Upper lobe of right lung (tissue), 1 donor: ENCODE measurements at regions of chr17 and their contacts with region 1.

Region 1: GRCh38 chr17:35612924-35613521 is 25.9 kb downstream of the AP2B1 start:
- DNase-seq: no peak
- ATAC-seq: peak; percentile 51
- H3K4me3 ChIP-seq: no peak overlapping the region
- H3K27ac ChIP-seq: no peak overlapping the region
- H3K4me1 ChIP-seq: no peaks in the 10 kb centered on the region
- H3K27me3 ChIP-seq: no peaks in the 10 kb centered on the region
- CTCF ChIP-seq: peak; percentile 58

Region 2: GRCh38 chr17:35568541-35568940 is 44.5 kb before region 1 on chr17:
- intact Hi-C with region 1: no loop called
- DNase-seq: no peak
- ATAC-seq: peak; percentile 54
- H3K4me3 ChIP-seq: peak overlapping the region; percentile 97
- H3K27ac ChIP-seq: peak overlapping the region; percentile 91
- H3K4me1 ChIP-seq: peaks cover 35% of the 10 kb centered on the region
- H3K27me3 ChIP-seq: no peaks in the 10 kb centered on the region
- CTCF ChIP-seq: no peak

Region 3: DNA sequence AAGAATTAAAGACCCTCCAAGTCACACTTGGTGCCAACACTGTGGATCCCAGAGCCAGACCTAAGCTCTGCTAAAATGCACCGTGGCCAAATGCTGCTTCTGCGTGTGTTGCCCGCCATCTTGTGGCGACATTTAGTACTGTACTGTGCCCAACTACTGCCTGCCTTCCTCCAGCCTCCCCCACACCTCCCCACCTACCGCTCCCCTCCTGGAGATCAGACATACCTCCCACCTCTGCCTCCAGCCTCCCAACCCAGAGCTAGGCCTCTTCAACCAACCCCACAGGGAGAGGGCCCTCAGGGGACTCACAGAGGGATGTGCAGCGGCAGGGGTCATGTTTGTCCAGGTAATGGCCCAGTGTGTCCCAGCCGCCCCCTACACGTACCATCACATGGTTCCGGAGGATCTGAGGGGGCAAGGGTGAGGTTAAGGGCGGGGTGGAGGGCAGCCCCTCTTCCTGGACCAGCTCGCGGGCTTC is 134.6 kb after region 1 on chr17:
- intact Hi-C with region 1: loop called (anchors 10 kb)
- DNase-seq: peak; percentile 80
- ATAC-seq: peak; percentile 87
- H3K4me3 ChIP-seq: no peak overlapping the region
- H3K27ac ChIP-seq: no peak overlapping the region
- H3K4me1 ChIP-seq: peaks cover 7% of the 10 kb centered on the region
- H3K27me3 ChIP-seq: peaks cover 49% of the 10 kb centered on the region
- CTCF ChIP-seq: peak; percentile 87